ENCODE measurements at regions of chr4 and their contacts with region 1.

Region 1: GRCh38 chr4:183261953-183262775 is 57.9 kb downstream of the CLDN22 start:
- DNase-seq: peak; percentile 92
- H3K4me3 Mint-ChIP-seq: no peak overlapping the region
- H3K27ac Mint-ChIP-seq: no peak overlapping the region
- H3K4me1 Mint-ChIP-seq: peaks cover 6% of the 10 kb centered on the region
- H3K27me3 Mint-ChIP-seq: no peaks in the 10 kb centered on the region

Region 2: DNA sequence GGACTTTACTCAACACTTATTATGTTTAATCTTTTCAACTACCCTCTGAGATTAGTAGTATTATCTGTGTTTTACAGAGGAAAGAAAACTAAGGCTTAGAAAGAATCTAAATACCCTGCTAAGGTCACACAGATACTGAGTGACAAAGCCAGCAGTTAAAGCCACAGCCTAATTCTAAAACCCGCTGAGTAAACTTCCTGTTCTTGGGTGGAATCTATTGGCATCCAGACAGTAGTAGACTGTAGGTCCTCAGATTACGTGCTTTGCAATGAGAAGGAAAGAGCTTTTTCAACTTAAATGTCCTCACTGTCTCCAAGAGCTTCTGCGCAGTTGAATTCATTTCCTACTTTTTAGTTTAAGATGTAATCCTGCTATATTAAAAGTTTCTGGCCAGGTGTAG is 893.0 kb before region 1 on chr4:
- CTCF ChIA-PET with region 1: no interaction called
- intact Hi-C with region 1: no loop called
- DNase-seq: no peak
- H3K4me3 Mint-ChIP-seq: no peak overlapping the region
- H3K27ac Mint-ChIP-seq: no peak overlapping the region
- H3K4me1 Mint-ChIP-seq: no peaks in the 10 kb centered on the region
- H3K27me3 Mint-ChIP-seq: peaks cover 12% of the 10 kb centered on the region

Region 3: DNA sequence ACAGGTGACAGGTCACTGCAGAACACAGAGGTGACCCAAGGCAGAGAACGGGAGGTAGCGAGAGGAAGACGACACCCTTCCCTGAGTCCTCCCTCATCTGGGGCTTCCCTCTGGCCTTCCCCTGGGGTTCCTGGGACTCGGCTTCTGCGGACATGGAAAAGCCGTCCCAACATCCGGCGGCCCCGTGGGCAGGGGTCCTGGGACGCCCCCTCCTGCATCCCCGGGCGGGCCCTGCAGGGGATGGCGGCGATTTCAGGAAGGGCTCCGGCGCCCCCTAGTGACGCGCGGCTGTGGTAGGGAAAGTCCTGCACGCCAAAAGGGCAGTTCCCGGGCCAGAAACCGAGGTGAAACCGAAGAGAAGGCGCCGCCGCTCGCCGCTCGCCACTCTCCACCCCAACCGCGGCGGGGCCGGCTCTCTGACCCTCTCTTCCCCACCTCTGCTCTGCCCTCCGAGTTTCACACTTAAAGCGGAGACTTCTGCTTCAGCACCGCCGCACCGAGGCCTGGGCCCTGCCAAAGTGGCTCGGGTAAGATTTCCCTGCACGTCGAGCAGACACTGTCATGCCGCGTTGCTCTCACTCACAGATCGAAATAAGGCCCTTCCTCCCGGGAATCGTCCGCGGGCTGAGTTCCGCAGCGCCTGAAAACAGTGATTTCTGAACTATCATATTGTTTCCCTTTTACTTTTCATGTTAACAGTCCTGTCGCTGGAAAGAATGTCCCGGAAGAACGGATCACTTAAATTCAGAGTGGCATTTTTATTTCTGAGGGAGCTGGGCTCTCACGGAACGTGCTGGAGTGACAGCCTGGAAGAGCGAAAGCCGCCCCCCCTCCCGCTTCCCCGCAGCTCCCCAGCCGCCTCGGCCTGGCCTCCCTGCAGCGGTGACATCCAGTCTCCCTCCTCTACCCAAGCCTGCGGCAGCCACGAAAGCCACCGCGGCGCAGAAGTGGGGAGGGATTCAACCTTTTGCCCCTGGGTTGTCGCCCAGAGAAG is 455.6 kb before region 1 on chr4:
- CTCF ChIA-PET with region 1: no interaction called
- intact Hi-C with region 1: loop called (anchors 5 kb)
- DNase-seq: peak; percentile 77
- H3K4me3 Mint-ChIP-seq: peak overlapping the region; percentile 77
- H3K27ac Mint-ChIP-seq: no peak overlapping the region
- H3K4me1 Mint-ChIP-seq: peaks cover 17% of the 10 kb centered on the region
- H3K27me3 Mint-ChIP-seq: no peaks in the 10 kb centered on the region

Region 4: GRCh38 chr4:182938205-182938645 is 323.9 kb before region 1 on chr4:
- CTCF ChIA-PET with region 1: interaction called, 138 read pairs
- intact Hi-C with region 1: loop called (anchors 1 kb)
- DNase-seq: peak; percentile 81
- H3K4me3 Mint-ChIP-seq: no peak overlapping the region
- H3K27ac Mint-ChIP-seq: no peak overlapping the region
- H3K4me1 Mint-ChIP-seq: peaks cover 6% of the 10 kb centered on the region
- H3K27me3 Mint-ChIP-seq: peaks cover 7% of the 10 kb centered on the region

Region 5: DNA sequence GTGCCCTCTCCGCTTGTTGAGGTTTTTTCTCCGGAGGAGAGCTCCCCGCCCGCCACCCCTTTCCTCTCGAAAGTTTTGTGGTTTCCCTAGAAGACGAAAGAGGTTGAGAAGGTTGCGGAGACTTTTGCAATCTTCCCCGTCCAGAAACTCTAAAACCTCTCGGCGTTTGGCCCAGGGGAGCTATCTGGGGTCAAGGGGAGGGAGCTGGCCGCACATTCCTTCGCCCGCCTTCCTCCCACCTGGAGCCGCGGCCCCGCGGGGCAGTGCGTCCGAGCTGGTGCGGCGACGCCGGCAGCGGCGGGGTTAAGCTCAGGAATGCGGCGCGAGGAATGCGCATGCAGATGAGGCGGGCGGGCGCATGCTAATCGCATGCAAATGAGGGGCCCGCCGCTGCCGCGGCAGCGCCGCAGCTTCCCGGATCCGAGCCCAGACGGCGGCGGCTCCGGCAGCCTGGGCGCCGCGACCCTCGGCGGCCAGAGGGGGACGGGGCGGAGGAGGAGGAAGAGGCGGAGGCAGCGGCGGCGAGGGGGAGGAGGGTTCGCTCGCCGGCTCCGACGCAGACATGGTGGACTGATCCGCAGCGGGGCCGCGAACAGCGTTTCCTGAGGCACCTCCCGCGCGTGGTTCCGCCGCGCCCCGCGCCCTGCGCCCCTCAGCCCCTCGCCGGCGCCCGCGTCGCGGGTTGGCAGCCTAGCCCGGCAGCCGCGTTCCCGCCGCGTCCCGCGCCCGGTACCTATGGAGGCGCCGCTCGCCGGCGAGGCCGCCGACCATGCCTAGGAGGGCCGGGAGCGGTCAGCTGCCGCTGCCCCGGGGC is 163.2 kb before region 1 on chr4 and contains the start of gene WWC2:
- CTCF ChIA-PET with region 1: interaction called, 10 read pairs
- intact Hi-C with region 1: loop called (anchors 1 kb)
- DNase-seq: peak; percentile 64
- H3K4me3 Mint-ChIP-seq: peak within 1 kb of the TSS; percentile 66
- H3K27ac Mint-ChIP-seq: no peak within 1 kb of the TSS
- H3K4me1 Mint-ChIP-seq: peaks cover 13% of the 10 kb centered on the region
- H3K27me3 Mint-ChIP-seq: peaks cover 23% of the 10 kb centered on the region
- total RNA-seq, gene WWC2: 6.7 to 10.0 TPM

Region 6: DNA sequence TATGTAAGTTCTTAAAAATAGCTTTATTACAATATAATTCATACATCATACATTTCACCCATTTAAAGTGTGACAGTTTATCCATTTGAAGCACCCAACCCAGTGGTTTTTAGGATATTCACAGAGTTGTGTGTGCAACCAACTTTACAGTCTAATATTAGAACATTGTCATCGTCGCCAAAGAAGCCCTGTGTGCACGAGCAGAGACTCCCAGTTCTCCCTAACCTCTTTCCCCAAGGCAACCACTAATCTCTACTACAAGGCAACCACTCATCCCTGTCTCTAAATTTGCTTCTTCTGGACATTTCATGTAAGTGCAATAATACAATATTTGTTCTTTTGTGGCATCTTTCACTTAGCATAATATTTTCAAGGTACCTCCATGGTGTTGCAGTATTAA is 10.2 kb after region 1 on chr4:
- CTCF ChIA-PET with region 1: interaction called, 15 read pairs
- intact Hi-C with region 1: no loop called
- DNase-seq: no peak
- H3K4me3 Mint-ChIP-seq: no peak overlapping the region
- H3K27ac Mint-ChIP-seq: no peak overlapping the region
- H3K4me1 Mint-ChIP-seq: no peaks in the 10 kb centered on the region
- H3K27me3 Mint-ChIP-seq: no peaks in the 10 kb centered on the region